ENCODE measurements at regions of chr16 and their contacts with region 1.

Region 1: GRCh38 chr16:24430945-24431760 is 108.2 kb upstream of the RBBP6 start:
- H3K4me3 Mint-ChIP-seq: no peak overlapping the region
- H3K27ac Mint-ChIP-seq: no peak overlapping the region
- H3K4me1 Mint-ChIP-seq: no peaks in the 10 kb centered on the region
- H3K27me3 Mint-ChIP-seq: peaks cover 1% of the 10 kb centered on the region

Region 2: GRCh38 chr16:24367186-24367710 is 63.9 kb before region 1 on chr16:
- intact Hi-C with region 1: loop called (anchors 2 kb)
- H3K4me3 Mint-ChIP-seq: no peak overlapping the region
- H3K27ac Mint-ChIP-seq: no peak overlapping the region
- H3K4me1 Mint-ChIP-seq: no peaks in the 10 kb centered on the region
- H3K27me3 Mint-ChIP-seq: peaks cover 3% of the 10 kb centered on the region

Region 3: DNA sequence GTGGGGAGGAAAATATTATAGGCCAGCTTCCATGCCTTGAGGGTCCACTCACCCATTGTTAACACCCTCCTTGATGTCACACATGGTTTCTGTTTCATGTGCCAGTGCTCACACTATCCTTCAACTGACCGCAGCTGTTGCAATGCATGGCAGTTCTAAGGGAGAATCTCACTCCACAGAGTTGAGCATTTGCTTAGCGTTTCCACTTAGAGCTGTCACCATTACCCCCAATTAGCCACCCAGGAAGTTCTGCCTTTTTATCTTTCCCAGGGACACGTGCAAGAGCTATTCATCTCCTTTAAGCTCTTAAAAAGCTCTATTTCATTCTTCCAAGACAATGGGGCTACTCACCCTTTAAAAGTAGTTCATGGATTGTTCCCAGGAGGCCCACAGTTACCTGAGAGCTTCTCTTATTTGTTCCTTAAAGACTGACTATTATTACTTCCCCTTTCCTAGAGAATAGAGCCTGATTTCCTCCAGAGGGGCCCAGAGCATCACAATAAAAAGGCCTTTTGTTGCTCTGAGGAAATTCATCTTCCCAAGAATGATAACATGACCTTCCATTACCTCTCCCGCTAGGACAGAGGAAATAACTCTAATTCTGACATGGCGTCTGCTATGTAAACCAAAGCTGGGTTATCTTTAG is 48.3 kb before region 1 on chr16:
- intact Hi-C with region 1: no loop called
- H3K4me3 Mint-ChIP-seq: no peak overlapping the region
- H3K27ac Mint-ChIP-seq: no peak overlapping the region
- H3K4me1 Mint-ChIP-seq: no peaks in the 10 kb centered on the region
- H3K27me3 Mint-ChIP-seq: no peaks in the 10 kb centered on the region

Region 4: GRCh38 chr16:24810951-24811843 is 380.0 kb after region 1 on chr16:
- intact Hi-C with region 1: no loop called
- H3K4me3 Mint-ChIP-seq: no peak overlapping the region
- H3K27ac Mint-ChIP-seq: no peak overlapping the region
- H3K4me1 Mint-ChIP-seq: no peaks in the 10 kb centered on the region
- H3K27me3 Mint-ChIP-seq: no peaks in the 10 kb centered on the region

Measured in dendritic cell treated with granulocyte-macrophage colony-stimulating factor and Interleukin-4, amounts not matched to agents 40 ng/mL and 50 ng/mL, for 4 days (primary cell).